PC-9 (cell line): ENCODE measurements at regions of chr12 and their contacts with region 1.

Region 1: DNA sequence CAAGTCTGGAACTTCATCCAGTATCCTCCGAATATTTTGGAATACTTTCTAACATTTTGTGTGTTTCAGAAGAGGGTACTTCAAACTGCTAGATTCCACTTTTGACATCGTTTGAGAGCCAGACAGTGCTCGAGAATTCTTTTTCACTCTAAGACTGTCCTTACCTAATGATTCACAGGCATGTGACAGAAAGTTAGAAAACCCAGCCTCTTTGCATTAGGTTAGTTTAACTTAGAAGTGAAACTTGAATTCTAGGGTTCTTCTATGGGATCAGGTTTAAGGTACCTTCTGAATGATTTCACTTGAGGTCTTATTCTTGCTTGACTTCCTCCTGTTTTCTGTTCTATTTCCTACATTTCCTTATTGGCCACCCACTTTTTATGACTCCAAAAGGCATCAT is 431.8 kb downstream of the SLC6A15 start:
- DNase-seq: no peak
- H3K4me3 ChIP-seq: no peak overlapping the region
- H3K27ac ChIP-seq: no peak overlapping the region
- H3K4me1 ChIP-seq: no peaks in the 10 kb centered on the region
- H3K27me3 ChIP-seq: no peaks in the 10 kb centered on the region
- CTCF ChIP-seq: no peak

Region 2: GRCh38 chr12:84455598-84455997 is 25.2 kb before region 1 on chr12:
- CTCF ChIA-PET with region 1: no interaction called
- POLR2A ChIA-PET with region 1: no interaction called
- intact Hi-C with region 1: loop called (anchors 1 kb)
- DNase-seq: no peak
- H3K4me3 ChIP-seq: no peak overlapping the region
- H3K27ac ChIP-seq: no peak overlapping the region
- H3K4me1 ChIP-seq: no peaks in the 10 kb centered on the region
- H3K27me3 ChIP-seq: no peaks in the 10 kb centered on the region
- CTCF ChIP-seq: no peak

Region 3: GRCh38 chr12:84502907-84503787 is 22.3 kb after region 1 on chr12:
- CTCF ChIA-PET with region 1: no interaction called
- POLR2A ChIA-PET with region 1: no interaction called
- intact Hi-C with region 1: no loop called
- DNase-seq: peak in 1 of 2 experiments; percentile 41
- H3K4me3 ChIP-seq: no peak overlapping the region
- H3K27ac ChIP-seq: no peak overlapping the region
- H3K4me1 ChIP-seq: peaks cover 7% of the 10 kb centered on the region
- H3K27me3 ChIP-seq: no peaks in the 10 kb centered on the region
- CTCF ChIP-seq: peak; percentile 62

Region 4: DNA sequence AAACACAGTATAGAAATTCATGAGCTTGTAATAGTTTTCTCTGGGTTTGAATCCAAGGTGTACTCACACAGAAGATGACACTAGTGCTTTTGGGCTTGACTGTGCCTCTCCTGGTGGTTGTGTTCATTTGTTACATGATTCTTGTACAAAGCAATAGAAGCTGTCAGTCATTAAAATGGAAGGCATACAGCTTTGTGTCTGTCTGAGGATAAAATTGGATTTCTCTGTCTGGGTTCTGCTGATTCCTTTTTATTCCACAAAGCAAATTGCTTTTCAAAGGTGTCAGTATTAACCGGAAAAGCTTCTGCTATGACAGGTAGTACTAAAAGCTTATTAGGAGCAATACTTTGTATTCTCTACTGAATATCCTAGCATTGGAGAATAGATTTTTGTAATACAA is 70.6 kb after region 1 on chr12:
- CTCF ChIA-PET with region 1: no interaction called
- POLR2A ChIA-PET with region 1: no interaction called
- intact Hi-C with region 1: no loop called
- DNase-seq: no peak
- H3K4me3 ChIP-seq: no peak overlapping the region
- H3K27ac ChIP-seq: no peak overlapping the region
- H3K4me1 ChIP-seq: no peaks in the 10 kb centered on the region
- H3K27me3 ChIP-seq: no peaks in the 10 kb centered on the region
- CTCF ChIP-seq: no peak

Region 5: GRCh38 chr12:86179855-86180254 is 1699.1 kb after region 1 on chr12:
- CTCF ChIA-PET with region 1: no interaction called
- POLR2A ChIA-PET with region 1: no interaction called
- intact Hi-C with region 1: no loop called
- DNase-seq: no peak
- H3K4me3 ChIP-seq: no peak overlapping the region
- H3K27ac ChIP-seq: no peak overlapping the region
- H3K4me1 ChIP-seq: no peaks in the 10 kb centered on the region
- H3K27me3 ChIP-seq: no peaks in the 10 kb centered on the region
- CTCF ChIP-seq: no peak